Gastrocnemius medialis (tissue), 4 donors: ENCODE measurements at regions of chr13 and their contacts with region 1.

Region 1: GRCh38 chr13:33263974-33264619 is 21.5 kb downstream of the STARD13 start:
- DNase-seq: peak in 1 of 2 donors; percentile 30
- ATAC-seq: peak; percentile 13 to 19
- H3K4me3 ChIP-seq: no peak overlapping the region
- H3K27ac ChIP-seq: peak overlapping the region in 1 of 4 donors; percentile 45
- H3K4me1 ChIP-seq: peaks cover 41 to 68% of the 10 kb centered on the region in 2 donors
- H3K27me3 ChIP-seq: no peaks in the 10 kb centered on the region
- CTCF ChIP-seq: no peak
- POLR2A ChIP-seq: no peak

Region 2: DNA sequence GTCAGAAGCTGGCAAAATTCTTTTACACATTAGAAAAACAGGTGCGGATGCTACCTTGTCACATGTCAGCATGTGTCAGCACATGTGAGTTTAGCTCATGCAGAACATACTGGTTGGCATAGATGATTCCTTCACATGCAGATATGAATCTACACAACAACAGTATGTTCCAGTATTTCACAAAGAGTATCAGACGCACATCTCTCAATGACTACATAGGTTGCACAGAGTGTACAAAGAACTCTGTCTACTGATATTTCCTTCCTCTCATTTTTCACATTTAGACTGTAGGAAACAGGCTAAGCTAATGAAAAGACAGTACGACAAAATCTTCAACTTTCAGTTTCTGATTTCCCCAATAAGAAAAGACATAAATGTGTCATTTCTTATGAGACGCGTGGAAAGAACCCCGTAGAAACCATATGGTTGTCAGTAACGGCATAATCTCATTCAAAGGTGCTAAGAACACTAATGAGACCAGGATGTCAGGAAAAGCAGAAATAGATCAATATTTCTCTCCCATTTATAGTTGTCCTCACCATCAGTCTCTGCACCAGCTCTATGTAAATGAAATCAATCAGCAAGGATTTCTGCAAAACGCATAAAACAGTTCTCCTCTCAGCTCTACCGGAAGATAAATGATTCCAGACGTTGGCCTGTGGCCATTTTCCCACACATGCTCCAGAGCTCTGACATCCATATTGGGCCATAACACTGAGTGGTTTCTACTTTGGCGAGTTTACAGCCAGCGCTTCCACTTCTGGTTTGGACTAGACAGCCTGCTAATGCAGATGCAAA is 59.8 kb before region 1 on chr13:
- in situ Hi-C with region 1: no loop called
- intact Hi-C with region 1: no loop called
- DNase-seq: peak; percentile 36 to 45
- ATAC-seq: peak; percentile 71 to 83
- H3K4me3 ChIP-seq: peak overlapping the region; percentile 37 to 48 (median 42)
- H3K27ac ChIP-seq: peak overlapping the region; percentile 54 to 76 (median 75)
- H3K4me1 ChIP-seq: peaks cover 47 to 48% of the 10 kb centered on the region in 2 donors
- H3K27me3 ChIP-seq: no peaks in the 10 kb centered on the region
- CTCF ChIP-seq: no peak
- POLR2A ChIP-seq: peak; percentile 20 to 33

Region 3: DNA sequence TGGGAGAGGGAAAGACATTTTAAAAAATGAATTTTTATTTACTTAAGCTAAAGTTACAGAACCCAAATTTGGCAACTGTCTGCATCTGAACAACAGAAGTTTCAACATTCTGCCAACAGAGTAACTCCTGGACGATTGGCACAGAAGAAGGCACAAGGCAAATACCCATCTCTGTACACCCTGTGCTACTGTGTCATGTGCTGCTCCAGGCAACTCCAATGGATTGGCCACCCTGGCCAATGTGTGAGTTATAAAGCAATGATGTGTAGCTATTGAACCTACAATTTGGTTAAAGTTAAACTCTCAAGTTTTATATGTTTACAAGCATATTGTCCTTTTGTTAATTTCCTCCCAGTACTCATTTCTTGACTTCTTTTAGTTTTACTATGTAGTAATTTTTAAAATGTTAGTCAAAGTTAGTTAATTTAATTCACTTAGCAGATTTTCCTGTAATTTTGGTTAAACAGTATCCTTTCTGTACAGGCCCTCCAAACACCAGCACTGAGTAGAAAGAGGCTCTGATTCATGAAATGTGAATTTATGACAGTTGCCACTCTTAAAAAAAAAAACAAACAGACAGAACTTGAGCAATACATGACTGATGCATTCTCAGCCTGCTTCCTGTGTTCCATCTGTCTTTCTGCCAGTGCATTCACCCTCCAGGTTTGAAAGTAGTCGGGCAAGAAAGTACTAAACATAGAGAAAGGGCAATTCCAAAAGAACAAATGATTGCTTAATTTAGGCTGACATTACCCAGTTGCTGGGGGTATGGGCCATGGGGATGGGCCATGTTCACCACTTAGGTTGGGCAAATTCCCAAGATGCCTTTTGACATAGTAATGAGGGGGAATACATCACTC is 15.5 kb after region 1 on chr13:
- in situ Hi-C with region 1: no loop called
- intact Hi-C with region 1: loop called (anchors 2 kb)
- DNase-seq: peak; percentile 74 to 79
- ATAC-seq: peak; percentile 91 to 93
- H3K4me3 ChIP-seq: peak overlapping the region in 2 of 4 donors; percentile 14 to 16
- H3K27ac ChIP-seq: peak overlapping the region; percentile 77 to 88 (median 82)
- H3K4me1 ChIP-seq: peaks cover 62 to 78% of the 10 kb centered on the region in 2 donors
- H3K27me3 ChIP-seq: no peaks in the 10 kb centered on the region
- CTCF ChIP-seq: no peak
- POLR2A ChIP-seq: no peak